ENCODE measurements at regions of chr3 and their contacts with region 1.

Region 1: DNA sequence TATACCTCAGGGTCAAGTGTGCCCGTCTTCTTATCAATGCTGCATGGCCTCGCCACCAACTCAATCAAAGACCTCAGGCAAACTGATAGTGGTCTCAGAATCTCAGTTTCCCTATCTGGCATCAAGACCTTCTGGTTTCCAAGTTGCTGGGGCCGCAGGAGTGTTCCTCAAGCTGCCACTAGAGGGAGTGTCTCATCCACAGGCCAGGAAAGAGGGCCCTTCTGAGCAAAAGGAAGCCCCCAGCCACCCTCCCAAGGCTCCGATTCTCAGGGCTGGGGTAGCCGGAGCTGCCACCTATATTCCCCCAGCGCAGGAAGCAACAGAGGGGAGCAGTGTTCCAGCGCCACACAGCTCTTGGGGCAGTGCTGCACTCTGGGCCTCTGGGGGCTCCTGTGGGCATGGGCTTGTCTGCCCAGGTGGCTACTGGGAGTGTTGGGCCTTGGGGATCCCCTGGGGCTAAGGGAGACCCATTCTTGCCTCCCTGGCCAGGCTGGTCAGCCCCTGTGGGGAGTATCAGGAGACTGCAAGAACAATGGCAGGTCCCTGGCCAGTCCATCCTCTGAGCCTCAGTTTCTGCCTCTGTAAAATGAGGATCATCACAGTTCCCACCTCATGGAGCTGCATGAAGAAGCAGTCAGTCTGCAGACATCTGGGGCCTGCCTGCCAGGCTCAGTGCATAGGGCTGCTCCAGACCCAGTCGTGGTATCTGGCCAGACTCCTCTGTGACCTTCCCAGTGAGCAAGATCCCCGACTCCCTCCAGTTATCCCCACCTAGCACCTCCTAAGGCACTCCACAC is 23.4 kb upstream of the SEC13 start:
- DNase-seq: peak; percentile 34
- ATAC-seq: peak in 1 of 2 donors; percentile 25

Region 2: DNA sequence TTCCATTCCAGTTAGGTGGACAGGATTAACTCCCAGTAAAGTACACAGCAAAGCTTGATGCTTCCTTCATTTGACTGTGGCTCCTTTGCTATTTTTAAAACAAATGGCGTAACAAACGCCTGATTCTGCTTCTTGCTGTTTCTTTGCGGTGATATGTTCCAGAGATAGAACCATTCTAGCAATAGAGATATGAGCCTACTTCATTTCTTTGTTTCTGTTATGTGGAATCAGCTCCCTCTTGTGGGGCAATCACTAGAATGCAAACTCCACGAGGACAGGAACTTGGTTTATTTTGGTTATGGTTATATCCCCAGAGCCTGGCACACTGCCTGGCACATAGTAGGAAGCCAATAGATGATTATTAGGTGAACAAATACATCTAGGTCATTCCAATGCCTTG is 349.1 kb after region 1 on chr3:
- intact Hi-C with region 1: loop called in 1 of 2 experiments (anchors 5 kb)
- DNase-seq: no peak
- ATAC-seq: no peak

Region 3: GRCh38 chr3:10738688-10739372 is 394.5 kb after region 1 on chr3:
- intact Hi-C with region 1: loop called (anchors 1 to 5 kb)
- DNase-seq: peak; percentile 71
- ATAC-seq: peak; percentile 87 to 89